Activated T-helper 1 cell treated with anti-CD3 and anti-CD28 coated beads, Interleukin-12 subunit alpha, Interleukin-12 subunit beta, Interleukin-2, Interleukin-4 antibody, amounts not matched to agents 30 ng/mL and 10 ng/mL and 1 ng/mL, durations not matched to agents 14 hours and 24 hours and 36 hours (primary cell): ENCODE measurements at regions of chrX and their contacts with region 1.

Region 1: GRCh38 chrX:78517124-78517523 is 142.0 kb downstream of the RTL3 start:
- DNase-seq: peak; percentile 56
- H3K4me3 Mint-ChIP-seq: peak overlapping the region; percentile 35
- H3K27ac Mint-ChIP-seq: peak overlapping the region; percentile 92
- H3K4me1 Mint-ChIP-seq: peaks cover 47% of the 10 kb centered on the region
- H3K27me3 Mint-ChIP-seq: no peaks in the 10 kb centered on the region

Region 2: GRCh38 chrX:77899081-77899828 is 617.9 kb before region 1 on chrX and contains the start of gene COX7B:
- intact Hi-C with region 1: loop called (anchors 5 kb)
- DNase-seq: peak; percentile 65
- H3K4me3 Mint-ChIP-seq: peak within 1 kb of the TSS; percentile 95
- H3K27ac Mint-ChIP-seq: peak within 1 kb of the TSS; percentile 94
- H3K4me1 Mint-ChIP-seq: peaks cover 14% of the 10 kb centered on the region
- H3K27me3 Mint-ChIP-seq: peaks cover 2% of the 10 kb centered on the region
- total RNA-seq, gene COX7B: 272 and 286 TPM in 2 replicates

Region 3: GRCh38 chrX:78035061-78035460 is 482.1 kb before region 1 on chrX:
- intact Hi-C with region 1: no loop called
- DNase-seq: no peak
- H3K4me3 Mint-ChIP-seq: no peak overlapping the region
- H3K27ac Mint-ChIP-seq: no peak overlapping the region
- H3K4me1 Mint-ChIP-seq: peaks cover 7% of the 10 kb centered on the region
- H3K27me3 Mint-ChIP-seq: no peaks in the 10 kb centered on the region

Region 4: DNA sequence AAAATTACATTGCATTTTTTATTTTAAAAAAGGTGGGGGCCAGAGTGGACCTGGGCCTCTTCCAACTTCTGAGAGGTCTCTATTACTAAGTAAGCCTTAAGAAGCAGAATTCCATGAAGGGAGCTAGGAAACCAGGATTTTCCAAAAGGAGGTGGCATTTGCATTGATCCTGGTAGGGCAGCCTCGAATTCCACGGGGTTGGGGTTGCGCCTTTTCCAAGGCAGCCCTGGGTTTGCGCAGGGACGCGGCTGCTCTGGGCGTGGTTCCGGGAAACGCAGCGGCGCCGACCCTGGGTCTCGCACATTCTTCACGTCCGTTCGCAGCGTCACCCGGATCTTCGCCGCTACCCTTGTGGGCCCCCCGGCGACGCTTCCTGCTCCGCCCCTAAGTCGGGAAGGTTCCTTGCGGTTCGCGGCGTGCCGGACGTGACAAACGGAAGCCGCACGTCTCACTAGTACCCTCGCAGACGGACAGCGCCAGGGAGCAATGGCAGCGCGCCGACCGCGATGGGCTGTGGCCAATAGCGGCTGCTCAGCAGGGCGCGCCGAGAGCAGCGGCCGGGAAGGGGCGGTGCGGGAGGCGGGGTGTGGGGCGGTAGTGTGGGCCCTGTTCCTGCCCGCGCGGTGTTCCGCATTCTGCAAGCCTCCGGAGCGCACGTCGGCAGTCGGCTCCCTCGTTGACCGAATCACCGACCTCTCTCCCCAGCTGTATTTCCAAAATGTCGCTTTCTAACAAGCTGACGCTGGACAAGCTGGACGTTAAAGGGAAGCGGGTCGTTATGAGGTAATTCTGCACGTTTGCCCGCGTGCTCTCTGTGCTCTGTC is 413.3 kb before region 1 on chrX and contains the start of gene PGK1:
- intact Hi-C with region 1: loop called (anchors 10 kb)
- DNase-seq: peak; percentile 92
- H3K4me3 Mint-ChIP-seq: peak within 1 kb of the TSS; percentile 97
- H3K27ac Mint-ChIP-seq: peak within 1 kb of the TSS; percentile 91
- H3K4me1 Mint-ChIP-seq: peaks cover 51% of the 10 kb centered on the region
- H3K27me3 Mint-ChIP-seq: no peaks in the 10 kb centered on the region
- total RNA-seq, gene PGK1: 799 and 814 TPM in 2 replicates

Region 5: GRCh38 chrX:78333521-78333920 is 183.6 kb before region 1 on chrX:
- intact Hi-C with region 1: loop called (anchors 1 kb)
- DNase-seq: peak; percentile 33
- H3K4me3 Mint-ChIP-seq: peak overlapping the region; percentile 53
- H3K27ac Mint-ChIP-seq: peak overlapping the region; percentile 93
- H3K4me1 Mint-ChIP-seq: peaks cover 73% of the 10 kb centered on the region
- H3K27me3 Mint-ChIP-seq: no peaks in the 10 kb centered on the region

Region 6: GRCh38 chrX:78653118-78653822 is 136.1 kb after region 1 on chrX:
- intact Hi-C with region 1: loop called (anchors 2 kb)
- DNase-seq: no peak
- H3K4me3 Mint-ChIP-seq: peak overlapping the region; percentile 55
- H3K27ac Mint-ChIP-seq: peak overlapping the region; percentile 49
- H3K4me1 Mint-ChIP-seq: peaks cover 38% of the 10 kb centered on the region
- H3K27me3 Mint-ChIP-seq: no peaks in the 10 kb centered on the region

Region 7: DNA sequence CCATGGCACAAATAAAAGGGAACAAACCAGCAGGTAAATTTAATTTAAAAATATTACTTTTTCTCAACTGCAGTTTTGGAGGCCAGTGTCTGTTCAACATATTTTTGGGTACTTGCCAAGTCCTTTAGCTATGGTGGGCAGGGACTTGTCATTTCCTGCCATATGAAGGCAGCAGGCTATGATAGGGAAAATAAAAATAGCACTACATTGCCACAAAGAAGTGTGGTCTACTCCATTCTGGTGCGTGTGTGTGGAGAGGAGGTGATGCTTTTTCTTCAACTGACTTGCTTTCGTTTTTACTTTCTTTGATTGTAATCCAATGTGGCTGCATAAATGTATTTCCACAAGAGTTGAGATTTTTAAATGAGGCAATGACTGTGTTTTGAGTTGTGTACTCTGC is 644.5 kb after region 1 on chrX:
- intact Hi-C with region 1: loop called (anchors 2 kb)
- DNase-seq: peak; percentile 48
- H3K4me3 Mint-ChIP-seq: peak overlapping the region; percentile 89
- H3K27ac Mint-ChIP-seq: peak overlapping the region; percentile 99
- H3K4me1 Mint-ChIP-seq: peaks cover 53% of the 10 kb centered on the region
- H3K27me3 Mint-ChIP-seq: no peaks in the 10 kb centered on the region

Region 8: GRCh38 chrX:79366873-79367749 is 850.0 kb after region 1 on chrX and contains the start of gene ITM2A:
- intact Hi-C with region 1: loop called (anchors 10 kb)
- DNase-seq: peak; percentile 37
- H3K4me3 Mint-ChIP-seq: peak within 1 kb of the TSS; percentile 94
- H3K27ac Mint-ChIP-seq: peak within 1 kb of the TSS; percentile 95
- H3K4me1 Mint-ChIP-seq: peaks cover 35% of the 10 kb centered on the region
- H3K27me3 Mint-ChIP-seq: no peaks in the 10 kb centered on the region
- total RNA-seq, gene ITM2A: 114 and 116 TPM in 2 replicates